ENCODE measurements at regions of chr2 and their contacts with region 1.

Region 1: GRCh38 chr2:73926493-73927338 is at the start of gene DGUOK:
- DNase-seq: peak; percentile 97
- H3K4me3 Mint-ChIP-seq: peak within 1 kb of the TSS; percentile 91
- H3K27ac Mint-ChIP-seq: peak within 1 kb of the TSS; percentile 88
- H3K4me1 Mint-ChIP-seq: peaks cover 56% of the 10 kb centered on the region
- H3K27me3 Mint-ChIP-seq: no peaks in the 10 kb centered on the region
- total RNA-seq, gene DGUOK: 92.8 and 98.0 TPM in 2 replicates

Region 2: DNA sequence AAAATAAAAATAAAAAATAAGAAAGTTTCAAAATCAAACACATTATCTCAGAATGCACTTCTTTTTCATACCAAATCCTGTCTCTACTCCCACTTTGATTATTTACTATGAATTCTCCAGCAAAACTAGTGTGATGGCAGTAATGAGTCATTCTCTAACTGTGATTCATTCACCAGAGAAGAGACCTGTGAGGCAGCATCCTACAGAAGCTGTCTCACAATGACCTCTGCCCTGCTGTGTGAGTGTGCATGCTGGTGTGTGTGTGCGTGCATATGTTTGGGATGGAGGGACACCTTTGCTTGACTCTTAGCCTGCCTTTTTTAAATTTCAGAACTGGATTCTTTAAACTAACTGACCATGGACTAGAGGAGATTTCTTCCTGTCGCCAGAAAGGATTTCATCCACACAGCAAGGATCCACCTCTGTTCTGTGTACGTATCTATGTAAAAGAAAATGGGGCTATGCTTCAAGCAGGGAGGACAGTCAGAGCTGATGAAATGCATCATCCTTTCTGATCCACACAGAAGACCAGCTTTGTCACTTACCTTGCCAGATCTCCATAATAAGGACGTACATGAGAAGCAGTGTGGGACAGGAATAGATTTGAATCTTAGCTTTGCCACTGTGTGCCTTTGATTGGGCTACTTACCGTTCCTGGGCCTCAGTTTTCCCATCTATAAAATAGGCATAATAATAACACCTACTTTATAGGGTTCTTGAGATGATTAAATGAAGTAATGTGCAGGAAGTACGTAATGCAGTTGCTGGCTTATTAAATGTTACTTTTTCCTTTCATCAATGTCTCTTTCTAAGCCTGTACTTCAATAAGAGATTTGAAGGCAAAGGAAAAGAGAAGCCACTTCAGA is 66.8 kb before region 1 on chr2:
- intact Hi-C with region 1: loop called (anchors 2 kb)
- DNase-seq: no peak
- H3K4me3 Mint-ChIP-seq: no peak overlapping the region
- H3K27ac Mint-ChIP-seq: peak overlapping the region; percentile 56
- H3K4me1 Mint-ChIP-seq: peaks cover 48% of the 10 kb centered on the region
- H3K27me3 Mint-ChIP-seq: no peaks in the 10 kb centered on the region

Region 3: DNA sequence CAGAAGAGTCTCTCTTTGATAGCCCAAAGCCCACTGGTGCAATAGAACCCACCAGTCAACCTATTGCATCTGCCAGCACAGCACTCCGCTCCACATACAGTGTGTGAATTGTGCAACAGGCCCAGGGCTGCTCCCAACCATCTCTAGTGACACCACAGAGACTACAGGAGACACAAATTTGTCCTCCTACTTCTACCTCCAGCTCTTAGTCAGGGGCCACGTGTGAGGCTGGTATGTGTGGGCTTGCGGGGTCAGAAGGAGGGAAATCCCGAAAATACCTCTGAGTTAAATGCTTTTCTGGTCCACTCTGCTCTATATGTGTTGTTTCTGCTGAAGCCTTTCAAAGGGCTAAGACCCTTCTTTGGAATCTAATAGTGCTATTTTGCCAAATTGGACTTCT is 18.0 kb after region 1 on chr2:
- intact Hi-C with region 1: loop called (anchors 2 kb)
- DNase-seq: no peak
- H3K4me3 Mint-ChIP-seq: peak overlapping the region; percentile 2
- H3K27ac Mint-ChIP-seq: peak overlapping the region; percentile 25
- H3K4me1 Mint-ChIP-seq: peaks cover 73% of the 10 kb centered on the region
- H3K27me3 Mint-ChIP-seq: no peaks in the 10 kb centered on the region

Region 4: DNA sequence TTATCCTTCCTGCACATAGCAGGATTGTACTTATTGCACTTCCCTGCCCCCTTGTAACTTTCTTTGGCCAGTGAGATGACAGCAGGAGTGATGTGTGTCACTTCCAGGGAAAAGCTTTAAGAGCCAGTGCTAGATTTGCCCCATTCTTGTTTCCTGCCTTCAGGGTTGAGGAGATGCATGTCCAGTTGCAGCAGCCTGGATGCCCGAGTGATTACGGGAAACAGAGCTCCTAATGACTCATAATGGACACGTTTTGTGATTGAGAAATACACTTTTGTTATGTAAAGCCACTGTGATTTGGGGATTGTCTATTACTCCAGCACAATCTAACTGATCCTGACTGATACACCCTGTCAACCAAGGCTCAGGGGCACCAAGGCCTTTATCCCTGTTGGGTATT is 53.0 kb after region 1 on chr2:
- intact Hi-C with region 1: loop called (anchors 1 kb)
- DNase-seq: no peak
- H3K4me3 Mint-ChIP-seq: peak overlapping the region; percentile 56
- H3K27ac Mint-ChIP-seq: peak overlapping the region; percentile 65
- H3K4me1 Mint-ChIP-seq: peaks cover 67% of the 10 kb centered on the region
- H3K27me3 Mint-ChIP-seq: peaks cover 22% of the 10 kb centered on the region

Region 5: DNA sequence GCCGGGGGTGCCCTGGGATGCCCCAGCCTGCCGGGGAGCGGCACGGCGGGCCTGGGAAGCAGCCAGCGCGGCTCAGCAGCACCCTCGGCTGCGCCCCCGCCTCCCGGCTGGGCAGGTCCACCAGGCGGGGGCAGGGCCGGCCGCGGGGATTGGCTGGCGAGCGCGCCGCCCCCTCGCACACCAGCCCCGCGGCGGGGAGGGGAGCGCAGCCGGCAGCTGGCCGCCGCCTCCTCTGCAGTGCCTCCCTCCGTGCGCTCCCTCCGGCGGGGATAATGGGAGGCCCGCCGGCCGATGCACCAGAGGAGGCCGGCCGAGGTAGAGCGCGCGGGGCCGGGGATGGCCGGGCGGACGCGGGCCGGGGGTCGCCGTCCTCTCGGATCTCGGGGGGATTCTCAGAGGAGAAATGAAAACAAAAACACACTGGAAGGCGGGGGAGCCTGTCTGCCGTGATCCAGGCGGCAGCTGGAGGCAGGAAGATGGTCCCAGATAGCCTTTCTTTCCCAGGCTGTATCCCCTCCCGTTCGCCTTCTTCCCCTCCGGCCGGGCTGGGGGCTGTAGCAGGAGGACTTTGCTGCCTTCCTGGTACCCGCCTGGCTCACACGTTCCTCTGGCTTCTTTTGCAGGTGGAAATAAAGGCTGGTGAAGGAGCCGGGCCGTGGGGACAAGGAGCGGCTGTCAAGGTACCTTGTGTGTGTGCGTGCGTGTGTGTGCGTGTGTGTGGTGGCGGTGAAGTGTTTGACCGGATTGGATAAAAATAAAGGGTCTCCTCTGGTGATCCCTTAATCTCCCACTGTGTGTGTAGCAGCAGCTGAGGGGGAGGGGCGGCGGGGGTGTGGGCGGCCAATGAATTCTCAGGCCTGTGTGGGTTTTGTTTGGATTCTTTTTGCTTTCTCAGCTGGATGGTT is 76.0 kb after region 1 on chr2:
- intact Hi-C with region 1: loop called (anchors 1 kb)
- DNase-seq: peak; percentile 81
- H3K4me3 Mint-ChIP-seq: peak overlapping the region; percentile 89
- H3K27ac Mint-ChIP-seq: peak overlapping the region; percentile 66
- H3K4me1 Mint-ChIP-seq: peaks cover 69% of the 10 kb centered on the region
- H3K27me3 Mint-ChIP-seq: peaks cover 2% of the 10 kb centered on the region

Region 6: GRCh38 chr2:74119912-74120825 is 193.5 kb after region 1 on chr2:
- intact Hi-C with region 1: loop called (anchors 2 kb)
- DNase-seq: peak; percentile 82
- H3K4me3 Mint-ChIP-seq: peak overlapping the region; percentile 82
- H3K27ac Mint-ChIP-seq: peak overlapping the region; percentile 88
- H3K4me1 Mint-ChIP-seq: peaks cover 7% of the 10 kb centered on the region
- H3K27me3 Mint-ChIP-seq: peaks cover 12% of the 10 kb centered on the region

Region 7: GRCh38 chr2:74198461-74199274 is 272.0 kb after region 1 on chr2 and contains the start of gene MTHFD2:
- intact Hi-C with region 1: loop called (anchors 2 kb)
- DNase-seq: peak; percentile 91
- H3K4me3 Mint-ChIP-seq: peak within 1 kb of the TSS; percentile 98
- H3K27ac Mint-ChIP-seq: peak within 1 kb of the TSS; percentile 100
- H3K4me1 Mint-ChIP-seq: peaks cover 59% of the 10 kb centered on the region
- H3K27me3 Mint-ChIP-seq: no peaks in the 10 kb centered on the region
- total RNA-seq, gene MTHFD2: 437 and 457 TPM in 2 replicates

Measured in activated T-helper 1 cell treated with anti-CD3 and anti-CD28 coated beads, Interleukin-12 subunit alpha, Interleukin-12 subunit beta, Interleukin-2, Interleukin-4 antibody, amounts not matched to agents 30 ng/mL and 10 ng/mL and 1 ng/mL, durations not matched to agents 14 hours and 24 hours and 36 hours (primary cell).